ENCODE measurements at regions of chr3 and their contacts with region 1.

Region 1: GRCh38 chr3:132659365-132660051 is at the start of gene ACAD11:
- DNase-seq: peak; percentile 55
- ATAC-seq: peak; percentile 74
- H3K4me3 Mint-ChIP-seq: peak within 1 kb of the TSS; percentile 97
- H3K27ac Mint-ChIP-seq: peak within 1 kb of the TSS; percentile 93
- H3K4me1 Mint-ChIP-seq: peaks cover 35% of the 10 kb centered on the region
- H3K27me3 Mint-ChIP-seq: no peaks in the 10 kb centered on the region
- CTCF ChIP-seq: no peak
- total RNA-seq, gene ACAD11: 16.4 and 24.0 TPM in 2 replicates

Region 2: DNA sequence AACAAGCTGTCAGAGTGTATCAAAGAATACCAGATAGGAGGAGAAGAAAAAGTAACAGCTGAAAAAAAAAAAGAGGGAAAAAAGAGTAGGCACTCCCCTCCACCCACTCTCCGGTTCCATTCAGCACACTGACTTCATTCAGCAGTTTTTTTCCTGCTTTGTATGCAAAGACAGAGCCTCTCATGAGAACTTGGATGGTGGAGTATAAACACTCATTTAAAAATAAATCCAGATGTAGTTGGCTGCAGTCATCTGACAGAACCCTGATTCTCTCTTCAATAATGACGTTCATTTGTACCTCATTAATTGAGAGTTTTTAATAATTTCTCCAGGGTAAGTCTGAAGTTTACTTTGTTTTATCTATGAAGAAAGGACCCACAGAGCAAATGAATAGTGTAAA is 459.7 kb after region 1 on chr3:
- CTCF ChIA-PET with region 1: no interaction called
- POLR2A ChIA-PET with region 1: no interaction called
- intact Hi-C with region 1: no loop called
- DNase-seq: no peak
- ATAC-seq: no peak
- H3K4me3 Mint-ChIP-seq: no peak overlapping the region
- H3K27ac Mint-ChIP-seq: no peak overlapping the region
- H3K4me1 Mint-ChIP-seq: no peaks in the 10 kb centered on the region
- H3K27me3 Mint-ChIP-seq: peaks cover 2% of the 10 kb centered on the region
- CTCF ChIP-seq: no peak

Region 3: DNA sequence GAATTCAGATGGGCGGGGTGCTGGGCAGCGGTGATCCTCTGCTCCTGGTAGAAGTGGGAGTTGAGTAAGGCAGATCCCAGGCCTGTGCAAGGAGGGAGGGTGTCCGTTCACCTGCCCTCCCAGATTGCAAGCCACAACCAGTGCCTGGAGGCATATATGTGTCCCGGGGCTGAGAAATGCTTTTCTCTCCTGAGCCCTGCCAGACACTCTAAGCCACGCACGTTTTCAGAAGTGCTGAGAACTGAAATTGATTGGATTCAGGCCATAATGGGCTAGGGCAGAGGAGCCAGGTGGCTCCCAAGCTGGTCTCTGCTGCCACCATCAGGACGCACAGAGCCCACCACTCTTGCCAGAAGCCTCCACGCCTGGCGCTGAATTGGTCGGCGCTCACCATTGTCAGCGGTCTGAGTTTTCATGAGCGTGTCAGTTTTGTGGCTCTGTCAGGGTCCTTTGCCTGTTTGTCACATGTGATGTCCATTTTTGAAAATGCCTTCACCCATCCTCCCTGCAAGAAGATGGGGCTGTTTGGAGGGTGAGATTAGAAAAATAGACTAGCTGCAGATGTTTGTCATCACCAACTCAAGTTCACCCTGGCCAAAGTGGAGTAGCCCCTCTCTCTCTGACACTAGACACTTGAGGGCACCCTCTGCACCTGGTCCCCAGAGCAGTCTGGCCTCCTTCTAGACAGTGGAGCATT is 725.0 kb after region 1 on chr3:
- CTCF ChIA-PET with region 1: no interaction called
- POLR2A ChIA-PET with region 1: no interaction called
- intact Hi-C with region 1: loop called (anchors 1 kb)
- DNase-seq: peak; percentile 22
- ATAC-seq: peak; percentile 73
- H3K4me3 Mint-ChIP-seq: no peak overlapping the region
- H3K27ac Mint-ChIP-seq: no peak overlapping the region
- H3K4me1 Mint-ChIP-seq: no peaks in the 10 kb centered on the region
- H3K27me3 Mint-ChIP-seq: peaks cover 11% of the 10 kb centered on the region
- CTCF ChIP-seq: no peak

Region 4: GRCh38 chr3:133661454-133662277 is 1002.2 kb after region 1 on chr3 and contains the start of gene TOPBP1:
- CTCF ChIA-PET with region 1: no interaction called
- POLR2A ChIA-PET with region 1: no interaction called
- intact Hi-C with region 1: loop called (anchors 2 kb)
- DNase-seq: peak; percentile 76
- ATAC-seq: peak; percentile 86
- H3K4me3 Mint-ChIP-seq: peak within 1 kb of the TSS; percentile 98
- H3K27ac Mint-ChIP-seq: peak within 1 kb of the TSS; percentile 95
- H3K4me1 Mint-ChIP-seq: peaks cover 34% of the 10 kb centered on the region
- H3K27me3 Mint-ChIP-seq: no peaks in the 10 kb centered on the region
- CTCF ChIP-seq: no peak
- total RNA-seq, gene TOPBP1: 45.8 and 49.9 TPM in 2 replicates